Left ventricle myocardium inferior (tissue), 1 donor: ENCODE measurements at regions of chr19 and their contacts with region 1.

Region 1: DNA sequence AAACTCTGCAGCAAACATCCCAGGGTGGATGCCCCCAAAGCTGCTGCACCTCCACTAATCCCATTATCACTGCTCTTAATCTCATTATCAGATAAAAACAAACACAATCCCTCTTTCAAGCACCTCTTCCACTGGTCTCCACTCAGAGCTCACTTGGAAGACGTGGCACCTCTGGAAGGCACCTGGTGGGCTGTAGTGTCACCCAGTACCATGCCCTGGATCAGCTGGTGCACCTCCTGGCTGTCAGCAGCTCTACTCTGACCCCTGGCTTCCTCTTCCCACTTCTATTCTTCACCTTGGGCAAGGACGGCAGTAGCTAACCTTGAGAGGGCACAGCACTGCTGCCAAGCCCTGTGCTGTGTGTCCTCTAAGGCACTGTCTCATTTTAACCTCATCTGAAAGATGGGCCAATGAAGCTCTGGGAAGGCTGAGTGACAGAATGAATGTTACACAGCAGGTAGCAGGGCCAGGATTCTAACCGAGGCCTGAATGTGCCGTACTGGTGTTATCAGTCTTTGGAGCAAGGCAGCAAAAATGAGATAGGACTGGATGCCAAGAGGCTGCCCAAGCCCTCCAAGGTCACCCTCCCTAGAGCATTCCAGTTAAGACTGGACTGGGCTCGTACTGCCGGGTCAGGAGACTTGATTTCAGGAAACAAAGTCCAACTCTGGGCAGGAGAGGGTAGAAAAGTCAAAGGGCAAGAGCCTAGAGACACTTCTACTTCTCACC is 7.4 kb downstream of the BRD4 start:
- DNase-seq: no peak
- H3K4me3 ChIP-seq: no peak overlapping the region
- H3K27ac ChIP-seq: peak overlapping the region; percentile 76
- H3K4me1 ChIP-seq: peaks cover 100% of the 10 kb centered on the region
- H3K27me3 ChIP-seq: no peaks in the 10 kb centered on the region
- CTCF ChIP-seq: no peak

Region 2: GRCh38 chr19:15292847-15293582 is 31.9 kb before region 1 on chr19:
- intact Hi-C with region 1: loop called (anchors 5 kb)
- DNase-seq: no peak
- H3K4me3 ChIP-seq: peak overlapping the region; percentile 20
- H3K27ac ChIP-seq: peak overlapping the region; percentile 71
- H3K4me1 ChIP-seq: peaks cover 100% of the 10 kb centered on the region
- H3K27me3 ChIP-seq: no peaks in the 10 kb centered on the region
- CTCF ChIP-seq: no peak